Activated T-helper 1 cell treated with anti-CD3 and anti-CD28 coated beads, Interleukin-12 subunit alpha, Interleukin-12 subunit beta, Interleukin-2, Interleukin-4 antibody, amounts not matched to agents 30 ng/mL and 10 ng/mL and 1 ng/mL, durations not matched to agents 14 hours and 24 hours and 36 hours (primary cell): ENCODE measurements at regions of chr6 and their contacts with region 1.

Region 1: DNA sequence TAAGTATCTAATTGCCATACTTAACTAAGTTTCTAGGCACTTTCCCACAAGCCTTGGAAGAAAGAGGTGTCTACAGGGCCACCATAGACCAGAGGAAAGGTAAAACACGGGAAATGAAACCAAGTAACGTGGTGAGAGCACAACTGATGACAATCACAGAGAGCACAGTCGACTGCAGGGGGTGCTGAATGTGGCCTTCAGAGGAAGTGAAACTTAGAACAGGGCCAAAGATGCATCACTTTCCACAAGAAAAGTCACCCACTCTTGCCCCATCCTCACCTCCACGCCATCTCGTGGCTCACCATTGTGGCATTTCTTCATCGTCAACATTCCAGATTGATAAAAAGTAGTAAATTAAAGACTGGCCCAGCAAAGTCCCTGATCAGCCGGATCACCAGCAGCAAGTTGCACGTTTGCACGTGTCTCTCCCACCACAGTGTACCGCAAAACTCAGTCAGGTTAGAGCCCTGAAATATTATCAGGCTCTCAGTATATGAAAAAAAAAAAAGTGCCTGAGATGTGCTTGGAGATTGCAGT is 31.4 kb downstream of the HIVEP2 start:
- DNase-seq: peak; percentile 73
- H3K4me3 Mint-ChIP-seq: peak overlapping the region; percentile 64
- H3K27ac Mint-ChIP-seq: peak overlapping the region; percentile 92
- H3K4me1 Mint-ChIP-seq: peaks cover 63% of the 10 kb centered on the region
- H3K27me3 Mint-ChIP-seq: no peaks in the 10 kb centered on the region

Region 2: DNA sequence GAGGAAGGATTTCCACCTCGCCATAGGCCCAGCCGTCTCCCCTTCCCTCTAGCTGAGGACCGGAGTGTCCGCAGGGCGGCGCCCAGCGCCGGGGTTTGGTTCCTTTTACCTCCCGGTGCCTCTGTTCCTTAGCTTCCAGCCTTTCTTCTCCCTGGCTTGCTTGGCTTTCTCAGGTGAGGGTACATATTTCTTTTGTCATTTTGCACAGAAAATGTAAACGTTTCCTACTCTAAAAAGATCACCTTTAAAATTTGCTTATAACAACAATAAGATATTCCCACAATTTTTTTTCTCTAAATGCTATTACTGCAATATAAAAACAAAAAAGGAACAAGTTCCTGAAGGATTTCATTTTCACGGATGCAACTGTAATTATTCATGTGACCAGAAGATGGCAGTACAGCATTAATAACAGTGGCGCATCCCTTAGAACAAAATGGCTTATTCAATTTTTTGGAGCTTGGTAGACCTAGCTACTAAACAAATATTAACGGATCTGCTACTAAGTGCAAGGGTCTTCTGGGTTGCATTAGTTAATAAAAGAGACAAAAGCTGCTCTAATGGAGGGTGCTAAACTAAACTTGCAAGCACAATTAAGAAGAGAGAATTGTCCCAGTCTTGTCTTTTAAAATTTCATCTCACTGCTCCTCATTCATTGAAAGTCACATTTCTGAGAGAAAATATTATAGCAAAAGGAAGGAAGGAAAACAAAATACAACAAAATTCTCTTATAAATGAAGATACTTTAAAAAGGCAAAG is 438.9 kb before region 1 on chr6:
- intact Hi-C with region 1: loop called (anchors 10 kb)
- DNase-seq: no peak
- H3K4me3 Mint-ChIP-seq: no peak overlapping the region
- H3K27ac Mint-ChIP-seq: no peak overlapping the region
- H3K4me1 Mint-ChIP-seq: peaks cover 7% of the 10 kb centered on the region
- H3K27me3 Mint-ChIP-seq: peaks cover 7% of the 10 kb centered on the region

Region 3: GRCh38 chr6:142819603-142820337 is 93.8 kb before region 1 on chr6:
- intact Hi-C with region 1: loop called (anchors 1 kb)
- DNase-seq: peak; percentile 50
- H3K4me3 Mint-ChIP-seq: peak overlapping the region; percentile 85
- H3K27ac Mint-ChIP-seq: peak overlapping the region; percentile 98
- H3K4me1 Mint-ChIP-seq: peaks cover 75% of the 10 kb centered on the region
- H3K27me3 Mint-ChIP-seq: peaks cover 3% of the 10 kb centered on the region

Region 4: GRCh38 chr6:142857233-142857761 is 56.3 kb before region 1 on chr6:
- intact Hi-C with region 1: loop called (anchors 1 kb)
- DNase-seq: no peak
- H3K4me3 Mint-ChIP-seq: peak overlapping the region; percentile 80
- H3K27ac Mint-ChIP-seq: peak overlapping the region; percentile 95
- H3K4me1 Mint-ChIP-seq: peaks cover 81% of the 10 kb centered on the region
- H3K27me3 Mint-ChIP-seq: no peaks in the 10 kb centered on the region

Region 5: DNA sequence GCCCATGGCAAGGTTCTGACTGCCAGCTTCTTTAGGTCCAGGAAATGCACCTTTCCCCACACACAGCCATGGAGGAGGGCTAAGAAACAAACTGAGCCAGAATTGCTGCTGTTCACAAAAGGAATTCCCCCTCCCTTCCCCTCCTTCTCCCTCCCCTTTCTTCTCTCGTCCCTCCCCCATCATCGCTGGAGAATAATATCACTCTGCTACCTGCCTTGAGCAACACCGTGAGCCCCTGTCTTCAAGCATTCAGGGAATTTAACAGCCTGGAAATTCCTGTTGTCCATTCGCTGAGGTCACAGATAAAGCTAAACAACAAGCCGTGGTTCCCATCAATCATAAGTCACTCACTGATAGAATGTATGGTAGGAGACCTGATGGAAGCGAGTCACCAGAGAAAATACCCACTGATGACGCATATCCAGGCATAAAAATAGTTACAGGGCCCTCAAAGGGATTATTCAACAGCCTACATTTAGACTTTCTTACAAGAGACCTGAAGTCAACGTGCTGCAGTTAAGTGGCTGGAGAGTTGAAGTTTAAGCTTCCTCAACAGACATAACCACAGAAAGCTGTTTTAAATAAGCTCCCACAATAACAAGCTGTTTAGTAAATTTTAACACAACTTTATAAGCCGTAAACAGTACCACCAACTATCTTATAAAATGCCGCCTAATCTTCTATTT is 28.3 kb before region 1 on chr6:
- intact Hi-C with region 1: loop called (anchors 1 kb)
- DNase-seq: peak; percentile 45
- H3K4me3 Mint-ChIP-seq: peak overlapping the region; percentile 96
- H3K27ac Mint-ChIP-seq: peak overlapping the region; percentile 99
- H3K4me1 Mint-ChIP-seq: peaks cover 92% of the 10 kb centered on the region
- H3K27me3 Mint-ChIP-seq: no peaks in the 10 kb centered on the region

Region 6: DNA sequence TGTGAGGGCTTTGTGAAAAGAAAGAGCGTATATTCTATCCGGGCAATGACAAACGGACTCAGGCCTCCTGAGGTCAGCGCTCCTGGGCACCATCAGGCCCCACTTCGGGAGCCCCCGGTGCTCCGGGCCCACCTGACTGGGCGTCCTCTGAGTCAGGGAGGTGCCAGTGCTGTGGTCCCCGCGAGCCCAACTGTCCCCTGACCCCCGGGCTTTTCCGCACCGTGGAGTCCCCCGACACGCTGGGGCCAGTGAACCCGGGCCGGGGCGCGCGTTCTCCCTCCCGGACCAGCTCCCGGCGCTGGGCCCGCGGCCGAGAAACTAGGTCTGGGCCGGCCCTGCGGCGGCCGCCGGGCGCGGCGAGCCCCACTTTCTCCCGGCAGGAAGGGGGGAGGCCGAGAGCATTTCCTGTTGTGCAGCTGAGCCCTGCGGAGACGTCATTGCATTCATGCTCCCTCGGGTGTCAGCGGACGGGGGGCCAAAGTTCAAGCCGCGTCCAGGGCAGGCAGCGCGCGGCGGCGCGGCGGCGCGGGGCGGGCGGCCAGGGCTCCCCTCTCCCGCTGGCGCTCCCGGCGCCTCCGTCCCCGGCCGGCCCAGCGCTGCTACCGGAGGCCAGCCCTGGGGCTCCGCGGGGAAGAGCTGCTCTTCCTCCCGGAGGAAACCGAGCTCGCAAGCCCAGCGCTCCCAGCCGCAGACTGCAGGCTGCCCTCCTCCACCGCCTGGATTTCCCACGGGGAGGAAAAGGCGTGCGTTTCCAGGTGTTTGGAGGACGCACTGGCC is 13.1 kb after region 1 on chr6:
- intact Hi-C with region 1: loop called (anchors 1 kb)
- DNase-seq: peak; percentile 76
- H3K4me3 Mint-ChIP-seq: peak overlapping the region; percentile 90
- H3K27ac Mint-ChIP-seq: peak overlapping the region; percentile 96
- H3K4me1 Mint-ChIP-seq: peaks cover 62% of the 10 kb centered on the region
- H3K27me3 Mint-ChIP-seq: no peaks in the 10 kb centered on the region